GM12878 (cell line): ENCODE measurements at regions of chr14 and their contacts with region 1.

Region 1: DNA sequence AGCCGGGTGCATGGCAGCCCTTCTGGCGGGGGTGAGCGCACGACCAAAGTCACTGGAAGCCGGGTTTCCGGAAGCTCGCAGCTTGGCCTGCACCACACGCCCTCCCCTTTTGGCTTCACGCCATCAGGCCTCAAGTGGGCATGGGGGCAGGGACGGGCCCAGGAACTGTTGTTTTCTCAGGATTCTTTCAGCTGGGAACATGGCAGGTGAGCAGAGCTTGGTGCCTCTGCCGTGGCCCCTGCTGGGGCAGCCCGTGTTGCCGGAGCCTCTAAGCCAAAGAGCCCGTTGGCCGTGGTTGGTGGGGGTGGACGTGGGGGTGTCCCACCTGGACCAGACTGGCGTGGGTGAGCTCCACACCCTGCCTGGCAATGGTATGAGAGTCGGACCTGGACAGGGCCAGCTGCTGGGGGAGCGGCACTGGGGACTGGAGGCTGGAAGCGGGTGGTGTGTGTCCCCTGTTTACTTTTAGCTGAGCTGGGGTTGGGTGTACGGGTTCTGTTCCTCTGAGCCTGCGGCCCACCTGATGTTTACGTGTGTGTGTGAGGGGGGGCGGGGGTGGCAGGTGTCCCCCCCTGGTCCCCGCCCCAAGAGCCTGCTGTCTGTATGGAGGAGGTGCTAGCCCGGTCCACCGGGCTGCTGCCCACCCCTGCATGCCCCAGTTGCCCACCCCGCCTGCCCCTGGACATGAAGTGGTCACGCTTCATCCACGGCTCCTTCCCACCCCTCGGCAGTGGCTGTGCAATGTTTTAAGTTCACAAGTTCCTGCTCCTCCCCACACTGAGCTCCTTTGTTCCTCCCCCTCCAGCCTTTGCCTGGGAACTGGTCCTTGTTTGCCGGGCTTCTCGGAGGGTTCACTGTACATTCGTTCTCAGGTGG is 28.7 kb upstream of the PLD4 start:
- DNase-seq: no peak
- ATAC-seq: no peak
- H3K4me3 ChIP-seq: no peak overlapping the region
- H3K27ac ChIP-seq: no peak overlapping the region
- H3K4me1 ChIP-seq: no peaks in the 10 kb centered on the region; the same call in 1 of the 2 replicates
- H3K27me3 ChIP-seq: peaks cover 0 to 3% of the 10 kb centered on the region in 2 experiments; a peak in 1 of 4 replicates
- CTCF ChIP-seq: no peak
- EP300 ChIP-seq: no peak
- POLR2A ChIP-seq: no peak
- RAD21 ChIP-seq: no peak

Region 2: GRCh38 chr14:104856869-104857860 is 38.9 kb before region 1 on chr14:
- CTCF ChIA-PET with region 1: no interaction called
- POLR2A ChIA-PET with region 1: no interaction called
- RAD21 ChIA-PET with region 1: no interaction called
- SMC1A ChIA-PET with region 1: no interaction called
- in situ Hi-C with region 1: no loop called
- intact Hi-C with region 1: no loop called
- DNase-seq: no peak
- ATAC-seq: no peak
- H3K4me3 ChIP-seq: no peak overlapping the region
- H3K27ac ChIP-seq: no peak overlapping the region
- H3K4me1 ChIP-seq: no peaks in the 10 kb centered on the region
- H3K27me3 ChIP-seq: no peaks in the 10 kb centered on the region; a peak in 1 of 4 replicates
- CTCF ChIP-seq: no peak
- EP300 ChIP-seq: no peak
- POLR2A ChIP-seq: no peak
- RAD21 ChIP-seq: no peak

Region 3: GRCh38 chr14:104870420-104871144 is 25.4 kb before region 1 on chr14:
- CTCF ChIA-PET with region 1: no interaction called
- POLR2A ChIA-PET with region 1: no interaction called
- RAD21 ChIA-PET with region 1: no interaction called
- SMC1A ChIA-PET with region 1: no interaction called
- in situ Hi-C with region 1: no loop called
- intact Hi-C with region 1: no loop called
- DNase-seq: no peak
- ATAC-seq: peak; percentile 70
- H3K4me3 ChIP-seq: no peak overlapping the region
- H3K27ac ChIP-seq: no peak overlapping the region
- H3K4me1 ChIP-seq: no peaks in the 10 kb centered on the region
- H3K27me3 ChIP-seq: peaks cover 0 to 2% of the 10 kb centered on the region in 2 experiments; a peak in 3 of 4 replicates
- CTCF ChIP-seq: peak; percentile 11 to 51 (median 13); a peak in 4 of 6 replicates
- EP300 ChIP-seq: no peak
- POLR2A ChIP-seq: no peak
- RAD21 ChIP-seq: no peak

Region 4: DNA sequence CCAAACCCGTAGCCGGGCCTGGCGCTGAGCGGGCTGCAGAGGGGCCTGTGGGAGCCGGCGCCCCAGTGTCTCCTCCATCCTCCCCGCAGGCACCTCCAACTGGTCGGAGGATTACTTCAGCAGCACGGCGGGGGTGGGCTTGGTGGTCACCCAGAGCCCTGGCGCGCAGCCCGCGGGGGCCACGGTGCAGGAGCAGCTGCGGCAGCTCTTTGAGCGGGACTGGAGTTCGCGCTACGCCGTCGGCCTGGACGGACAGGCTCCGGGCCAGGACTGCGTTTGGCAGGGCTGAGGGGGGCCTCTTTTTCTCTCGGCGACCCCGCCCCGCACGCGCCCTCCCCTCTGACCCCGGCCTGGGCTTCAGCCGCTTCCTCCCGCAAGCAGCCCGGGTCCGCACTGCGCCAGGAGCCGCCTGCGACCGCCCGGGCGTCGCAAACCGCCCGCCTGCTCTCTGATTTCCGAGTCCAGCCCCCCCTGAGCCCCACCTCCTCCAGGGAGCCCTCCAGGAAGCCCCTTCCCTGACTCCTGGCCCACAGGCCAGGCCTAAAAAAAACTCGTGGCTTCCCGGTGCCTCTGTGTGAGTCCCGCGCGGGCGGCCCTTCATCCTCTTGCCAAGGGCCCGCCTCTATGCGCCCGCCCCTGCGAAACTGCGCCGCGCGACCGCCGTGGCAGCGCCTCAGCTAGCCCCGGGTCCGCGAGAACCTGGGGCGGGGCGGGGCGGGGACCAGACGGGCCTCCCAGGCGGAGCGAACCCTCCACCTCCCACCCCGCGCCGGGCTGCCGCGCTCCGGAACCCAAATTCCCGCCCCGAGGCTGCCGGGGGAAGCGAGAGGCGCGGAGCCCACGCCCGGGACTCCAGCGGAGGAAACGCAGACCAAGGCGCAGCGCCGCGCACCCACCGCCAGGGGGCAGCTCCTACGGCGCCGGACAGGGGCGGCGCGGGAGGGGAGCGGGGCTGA is 36.9 kb after region 1 on chr14:
- CTCF ChIA-PET with region 1: interaction called, 5 read pairs
- POLR2A ChIA-PET with region 1: no interaction called
- RAD21 ChIA-PET with region 1: interaction called, 3 read pairs
- SMC1A ChIA-PET with region 1: interaction called, 4 read pairs
- in situ Hi-C with region 1: no loop called
- intact Hi-C with region 1: loop called (anchors 5 kb)
- DNase-seq: no peak
- ATAC-seq: peak; percentile 89
- H3K4me3 ChIP-seq: peak overlapping the region; percentile 34; the same call in 1 of the 2 replicates
- H3K27ac ChIP-seq: no peak overlapping the region
- H3K4me1 ChIP-seq: no peaks in the 10 kb centered on the region
- H3K27me3 ChIP-seq: peaks cover 9 to 11% of the 10 kb centered on the region in 2 experiments
- CTCF ChIP-seq: peak; percentile 44 to 78 (median 67)
- EP300 ChIP-seq: no peak
- POLR2A ChIP-seq: peak; percentile 48; the same call in 1 of the 2 replicates
- RAD21 ChIP-seq: peak; percentile 38; the same call in 1 of the 2 replicates

Region 5: GRCh38 chr14:104976198-104977007 is 80.4 kb after region 1 on chr14:
- CTCF ChIA-PET with region 1: no interaction called
- POLR2A ChIA-PET with region 1: no interaction called
- RAD21 ChIA-PET with region 1: interaction called, 4 read pairs
- SMC1A ChIA-PET with region 1: interaction called, 8 read pairs
- in situ Hi-C with region 1: no loop called
- intact Hi-C with region 1: loop called (anchors 10 kb)
- DNase-seq: peak; percentile 5
- ATAC-seq: peak; percentile 95
- H3K4me3 ChIP-seq: no peak overlapping the region
- H3K27ac ChIP-seq: no peak overlapping the region
- H3K4me1 ChIP-seq: no peaks in the 10 kb centered on the region; the same call in 1 of the 2 replicates
- H3K27me3 ChIP-seq: peaks cover 7 to 10% of the 10 kb centered on the region in 2 experiments
- CTCF ChIP-seq: peak; percentile 88 to 97 (median 97); a peak in 5 of 6 replicates
- EP300 ChIP-seq: no peak
- POLR2A ChIP-seq: no peak
- RAD21 ChIP-seq: peak; percentile 92